Thyroid gland (tissue), 4 donors: ENCODE measurements at regions of chr15 and their contacts with region 1.

Region 1: GRCh38 chr15:56886932-56887781 is 31.3 kb upstream of the TCF12 start:
- DNase-seq: peak; percentile 95
- H3K4me3 ChIP-seq: peak overlapping the region; percentile 30 to 63 (median 52)
- H3K27ac ChIP-seq: peak overlapping the region; percentile 84 to 98 (median 92)
- H3K4me1 ChIP-seq: peaks cover 0 to 16% of the 10 kb centered on the region in 2 donors
- H3K27me3 ChIP-seq: no peaks in the 10 kb centered on the region
- CTCF ChIP-seq: no peak
- POLR2A ChIP-seq: peak; percentile 22 to 89

Region 2: DNA sequence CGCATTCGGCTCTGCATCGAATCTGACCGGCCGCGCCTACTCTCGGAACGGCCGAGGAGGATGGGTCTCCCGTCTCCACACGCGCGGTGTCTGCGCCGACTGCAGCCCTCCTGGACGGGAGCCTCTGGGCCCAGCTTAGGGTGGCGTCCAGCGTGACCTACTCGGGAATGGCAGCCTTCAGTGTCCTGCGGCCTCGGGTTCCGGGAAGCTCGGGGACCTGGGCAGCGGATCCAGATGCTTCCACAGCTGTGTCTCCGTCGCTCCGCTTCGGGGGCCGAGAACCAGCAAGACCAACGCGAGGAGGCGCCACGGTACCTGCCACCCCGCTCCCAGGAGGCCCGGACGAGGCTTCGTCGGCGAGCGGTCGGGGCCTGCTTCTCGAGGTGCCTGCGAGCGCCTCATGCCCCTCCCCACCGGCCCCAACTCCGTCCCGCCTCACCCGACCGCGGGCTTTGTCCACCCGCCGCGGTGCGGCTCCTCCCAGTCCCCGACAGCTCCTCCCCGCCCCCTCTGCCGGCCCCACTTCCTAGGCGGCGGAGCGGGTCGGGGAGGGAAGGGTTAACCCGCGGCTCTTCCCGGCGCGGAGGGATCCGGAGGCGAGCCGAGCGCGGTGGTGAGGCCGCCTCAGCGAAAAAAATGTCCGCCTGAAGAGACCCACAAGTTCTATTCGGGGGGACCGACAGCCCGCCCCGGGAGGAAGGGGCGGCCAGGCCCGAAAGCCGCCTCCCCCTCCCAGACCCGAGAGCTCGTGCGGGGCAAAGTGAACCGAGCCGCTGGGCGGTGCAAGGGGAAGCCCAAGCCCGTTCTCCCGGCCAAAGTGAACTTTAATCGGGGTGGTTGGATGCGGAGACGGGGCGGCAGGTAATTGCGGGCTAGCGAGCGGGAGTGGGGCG is 31.1 kb after region 1 on chr15 and contains the start of gene TCF12:
- intact Hi-C with region 1: loop called (anchors 2 kb)
- DNase-seq: peak; percentile 94 to 95
- H3K4me3 ChIP-seq: peak within 1 kb of the TSS; percentile 92 to 98 (median 96)
- H3K27ac ChIP-seq: peak within 1 kb of the TSS; percentile 70 to 95 (median 90)
- H3K4me1 ChIP-seq: peaks cover 0 to 22% of the 10 kb centered on the region in 2 donors
- H3K27me3 ChIP-seq: no peaks in the 10 kb centered on the region
- CTCF ChIP-seq: peak in 3 of 6 experiments; percentile 22 to 43 (median 38)
- POLR2A ChIP-seq: peak; percentile 40 to 85
- total RNA-seq, gene TCF12: 54.8 to 156 (median 108) TPM